A673 (cell line): ENCODE measurements at regions of chr2 and their contacts with region 1.

Region 1: GRCh38 chr2:85551698-85552678 is 9.3 kb downstream of the GGCX start:
- DNase-seq: peak; percentile 83
- H3K4me3 ChIP-seq: no peak overlapping the region
- H3K27ac ChIP-seq: no peak overlapping the region
- H3K4me1 ChIP-seq: no peaks in the 10 kb centered on the region
- H3K27me3 ChIP-seq: no peaks in the 10 kb centered on the region
- CTCF ChIP-seq: peak; percentile 90

Region 2: GRCh38 chr2:85420536-85421259 is 131.3 kb before region 1 on chr2:
- CTCF ChIA-PET with region 1: interaction called, 28 read pairs
- POLR2A ChIA-PET with region 1: interaction called, 9 read pairs
- intact Hi-C with region 1: loop called (anchors 1 kb)
- DNase-seq: peak; percentile 91
- H3K4me3 ChIP-seq: no peak overlapping the region
- H3K27ac ChIP-seq: peak overlapping the region; percentile 58
- H3K4me1 ChIP-seq: peaks cover 22% of the 10 kb centered on the region
- H3K27me3 ChIP-seq: no peaks in the 10 kb centered on the region
- CTCF ChIP-seq: peak; percentile 100